GM23248 (cell line): ENCODE measurements at regions of chrX and their contacts with region 1.

Region 1: DNA sequence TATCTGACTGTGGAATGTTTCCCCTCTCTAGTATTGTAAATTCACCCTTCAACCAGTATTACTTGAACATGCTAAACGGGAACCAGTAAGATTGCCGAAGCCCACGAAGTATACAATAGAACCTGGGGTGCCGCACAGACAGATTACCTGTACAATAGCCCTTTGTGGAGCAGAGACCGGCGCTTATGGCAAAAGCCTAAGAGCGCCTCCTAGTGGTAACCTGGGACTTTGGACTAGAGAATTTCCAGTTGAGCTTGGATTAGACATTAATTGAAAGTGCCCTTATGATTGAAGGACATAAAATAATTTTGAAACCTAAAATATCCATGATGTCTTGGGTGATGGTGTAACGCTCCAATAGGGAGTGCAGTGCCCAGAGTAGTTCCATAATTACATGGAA is 14.1 kb downstream of the ZNF157 start:
- DNase-seq: peak; percentile 65
- H3K4me3 ChIP-seq: no peak overlapping the region
- H3K27ac ChIP-seq: no peak overlapping the region
- H3K4me1 ChIP-seq: no peaks in the 10 kb centered on the region
- H3K27me3 ChIP-seq: no peaks in the 10 kb centered on the region

Region 2: GRCh38 chrX:47217642-47218279 is 166.7 kb before region 1 on chrX:
- in situ Hi-C with region 1: loop called (anchors 25 kb)
- DNase-seq: peak; percentile 97
- H3K4me3 ChIP-seq: peak overlapping the region; percentile 85
- H3K27ac ChIP-seq: peak overlapping the region; percentile 99
- H3K4me1 ChIP-seq: peaks cover 25% of the 10 kb centered on the region
- H3K27me3 ChIP-seq: no peaks in the 10 kb centered on the region